Aorta (tissue), 5 donors: ENCODE measurements at regions of chr17 and their contacts with region 1.

Region 1: GRCh38 chr17:13002766-13003451 is 14.9 kb downstream of the ELAC2 start:
- DNase-seq: peak; percentile 73 to 93
- ATAC-seq: peak; percentile 90
- H3K4me3 ChIP-seq: no peak overlapping the region
- H3K27ac ChIP-seq: no peak overlapping the region
- H3K4me1 ChIP-seq: no peaks in the 10 kb centered on the region
- H3K27me3 ChIP-seq: no peaks in the 10 kb centered on the region

Region 2: DNA sequence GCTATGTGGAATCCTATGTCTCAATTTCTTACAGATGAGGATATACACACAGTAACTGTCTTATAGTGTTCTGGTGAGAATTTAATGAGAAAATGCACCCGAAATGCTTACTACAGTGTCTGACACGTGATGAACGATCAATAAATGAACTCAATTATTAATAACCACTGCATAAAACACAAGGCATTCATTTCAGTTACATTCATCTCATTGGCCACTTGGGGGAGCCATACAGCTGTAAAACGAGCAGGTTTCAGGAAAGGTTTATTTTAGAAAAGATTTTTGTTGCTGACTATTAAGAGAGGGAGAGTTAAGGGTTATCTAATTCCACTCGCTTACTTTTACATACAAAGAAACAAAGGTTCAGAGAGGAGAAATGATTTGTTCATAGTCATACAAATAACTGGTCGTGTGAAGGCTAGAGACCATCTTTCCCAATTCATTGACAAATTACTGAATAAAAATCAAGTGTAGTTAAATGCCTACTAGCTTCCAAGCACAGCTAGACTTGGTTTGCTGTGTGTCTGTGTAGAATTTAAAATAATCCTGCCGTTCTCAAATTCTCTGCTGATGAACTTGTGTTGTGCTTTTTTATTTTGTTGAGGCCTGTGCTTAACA is 822.2 kb before region 1 on chr17:
- intact Hi-C with region 1: loop called (anchors 1 kb)
- DNase-seq: no peak
- ATAC-seq: peak; percentile 76
- H3K4me3 ChIP-seq: no peak overlapping the region
- H3K27ac ChIP-seq: no peak overlapping the region
- H3K4me1 ChIP-seq: peaks cover 0 to 4% of the 10 kb centered on the region in 2 donors
- H3K27me3 ChIP-seq: no peaks in the 10 kb centered on the region

Region 3: DNA sequence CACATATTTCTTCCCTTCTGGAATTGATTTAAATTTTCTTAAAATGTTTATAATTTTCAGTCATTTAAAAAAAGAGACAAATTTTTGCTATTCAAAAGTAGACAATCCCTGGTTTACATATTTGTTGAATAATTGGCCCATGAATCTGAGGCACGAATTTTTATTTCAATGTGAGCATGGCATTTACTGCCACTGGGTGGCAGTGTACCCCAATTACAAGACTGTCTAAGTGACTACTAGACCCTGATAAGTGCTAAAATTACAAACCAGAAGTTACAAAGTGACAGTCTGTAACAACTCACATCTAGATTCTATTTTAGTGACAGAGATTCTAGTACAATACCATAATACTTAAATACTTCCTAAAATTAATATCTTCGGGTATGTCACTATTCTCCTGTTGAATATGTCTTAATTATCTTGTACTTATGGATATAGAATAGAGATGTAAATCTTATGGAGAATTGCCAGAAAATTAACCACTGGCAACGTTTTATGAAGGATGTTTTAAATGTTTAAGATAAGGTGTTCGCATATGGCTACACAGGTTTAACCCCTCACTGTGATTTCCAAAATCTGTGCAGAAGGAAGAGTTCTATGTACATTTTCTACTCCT is 746.4 kb before region 1 on chr17:
- intact Hi-C with region 1: loop called in 1 of 2 experiments (anchors 2 kb)
- DNase-seq: no peak
- ATAC-seq: peak; percentile 77
- H3K4me3 ChIP-seq: peak overlapping the region; percentile 23 to 35
- H3K27ac ChIP-seq: no peak overlapping the region
- H3K4me1 ChIP-seq: no peaks in the 10 kb centered on the region
- H3K27me3 ChIP-seq: no peaks in the 10 kb centered on the region

Region 4: DNA sequence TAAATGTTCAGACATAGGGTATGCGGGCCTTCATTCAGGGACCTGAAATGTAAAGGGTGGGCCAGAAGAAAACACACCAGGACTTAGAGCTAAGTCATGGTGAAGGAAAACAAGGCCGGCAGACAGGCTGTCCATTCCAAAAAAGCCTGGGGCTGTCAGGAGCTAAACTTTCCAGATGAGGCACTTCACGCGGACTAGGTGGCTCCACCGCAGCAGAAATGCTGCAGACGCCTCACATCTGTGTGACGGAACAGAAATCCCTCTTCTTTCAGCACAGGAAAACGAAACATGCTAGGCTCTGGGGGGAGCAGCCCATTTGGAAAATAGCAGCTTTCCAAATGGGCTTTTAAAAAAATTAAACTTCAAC is 510.1 kb after region 1 on chr17:
- intact Hi-C with region 1: no loop called
- DNase-seq: no peak
- ATAC-seq: no peak
- H3K4me3 ChIP-seq: no peak overlapping the region
- H3K27ac ChIP-seq: no peak overlapping the region
- H3K4me1 ChIP-seq: no peaks in the 10 kb centered on the region
- H3K27me3 ChIP-seq: no peaks in the 10 kb centered on the region